ENCODE measurements at regions of chr10 and their contacts with region 1.

Region 1: GRCh38 chr10:119596537-119597404 is at the start of gene TIAL1:
- DNase-seq: peak; percentile 98 to 100
- H3K4me3 ChIP-seq: peak within 1 kb of the TSS; percentile 72
- H3K4me1 ChIP-seq: peaks cover 25% of the 10 kb centered on the region
- H3K27me3 ChIP-seq: no peaks in the 10 kb centered on the region

Region 2: GRCh38 chr10:119061352-119061751 is 535.4 kb before region 1 on chr10:
- in situ Hi-C with region 1: loop called (anchors 25 kb)
- DNase-seq: no peak
- H3K4me3 ChIP-seq: no peak overlapping the region
- H3K4me1 ChIP-seq: peaks cover 3% of the 10 kb centered on the region; the same call in 1 of the 2 replicates
- H3K27me3 ChIP-seq: no peaks in the 10 kb centered on the region

Region 3: GRCh38 chr10:119253433-119254174 is 343.2 kb before region 1 on chr10:
- in situ Hi-C with region 1: no loop called
- DNase-seq: peak in 1 of 2 experiments; percentile 26
- H3K4me3 ChIP-seq: no peak overlapping the region
- H3K4me1 ChIP-seq: peaks cover 13% of the 10 kb centered on the region
- H3K27me3 ChIP-seq: no peaks in the 10 kb centered on the region

Measured in HAP-1 (cell line).